ENCODE measurements at regions of chr1 and their contacts with region 1.

Region 1: GRCh38 chr1:16293538-16293937 is 56.6 kb upstream of the CPLANE2 start:
- DNase-seq: no peak

Region 2: GRCh38 chr1:16249596-16250241 is 43.8 kb before region 1 on chr1:
- intact Hi-C with region 1: loop called in 1 of 2 experiments (anchors 5 kb)
- DNase-seq: no peak

Region 3: DNA sequence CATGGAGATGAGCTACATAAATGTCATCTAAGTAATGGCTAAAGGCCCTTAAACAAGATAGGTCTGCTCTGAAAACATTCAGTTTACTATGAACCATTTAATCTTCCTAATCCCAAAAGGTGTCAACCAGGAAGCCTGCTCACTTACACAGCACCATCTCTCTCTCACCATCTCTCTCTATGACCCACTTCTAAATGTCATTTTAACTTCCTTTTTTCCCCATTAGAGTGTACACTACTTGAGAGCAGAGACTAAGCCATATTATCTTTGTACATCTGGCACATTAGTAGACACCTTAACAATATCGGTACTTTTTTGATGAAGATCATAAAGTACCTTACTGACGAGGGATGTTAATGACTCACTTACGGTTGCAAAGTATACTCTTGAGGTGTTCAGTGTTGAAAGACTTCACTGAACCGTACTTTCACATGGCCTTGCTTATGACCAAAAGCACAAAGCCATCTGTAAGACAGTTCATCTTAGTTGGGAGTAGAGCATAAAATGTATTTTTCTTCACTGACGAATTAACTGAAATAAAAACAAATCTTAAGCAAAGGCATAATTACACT is 33.4 kb after region 1 on chr1:
- intact Hi-C with region 1: no loop called
- DNase-seq: no peak

Region 4: GRCh38 chr1:16396591-16396990 is 103.1 kb after region 1 on chr1:
- intact Hi-C with region 1: no loop called
- DNase-seq: no peak

Measured in posterior vena cava (tissue), 2 donors.